Heart right ventricle (tissue), 16 donors: ENCODE measurements at regions of chr10 and their contacts with region 1.

Region 1: DNA sequence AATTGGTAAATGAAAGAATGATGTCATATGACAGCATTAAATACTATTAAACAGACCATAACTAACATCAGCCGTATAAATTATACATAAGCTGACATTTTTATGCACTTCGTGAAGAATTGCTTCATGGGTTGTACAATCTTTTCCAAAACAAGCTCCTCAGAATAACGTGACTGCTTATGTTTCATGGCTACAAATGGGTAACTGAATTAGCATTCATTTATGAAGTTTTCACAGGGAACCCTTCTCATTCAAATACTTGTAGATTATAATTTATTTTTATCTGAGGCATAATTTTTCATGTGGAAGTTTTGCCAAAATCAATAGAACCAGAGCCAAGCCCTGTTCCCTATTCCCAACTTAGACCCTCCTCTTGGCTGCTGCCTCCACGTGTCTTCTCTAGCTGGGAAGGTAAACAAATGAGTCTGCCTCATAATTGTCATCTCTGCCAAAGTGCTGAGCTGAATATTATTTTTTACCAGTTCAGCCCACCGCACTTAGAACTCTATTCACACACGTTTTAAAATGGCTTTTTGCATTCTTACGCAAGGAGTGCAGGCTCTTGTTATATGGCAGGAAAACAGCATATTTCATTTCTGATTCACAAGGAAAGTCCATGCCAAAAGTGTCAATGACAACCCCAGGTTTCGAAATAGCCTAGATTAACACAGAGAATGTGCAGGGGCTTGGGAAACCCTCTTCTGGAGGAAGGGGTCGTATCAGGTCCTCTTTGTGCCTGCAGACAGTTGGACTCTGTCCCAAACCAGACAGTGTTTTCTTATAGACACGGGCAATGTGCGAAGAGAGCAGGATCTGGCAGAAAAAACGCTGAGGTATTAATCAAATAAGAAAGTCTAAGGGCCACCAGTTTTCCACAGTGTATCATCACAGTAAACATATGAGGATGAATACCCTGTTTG is 370.7 kb upstream of the MGMT start:
- DNase-seq: peak in 1 of 2 donors; percentile 21
- ATAC-seq: peak; percentile 63 to 88 (median 76)
- H3K4me3 ChIP-seq: no peak overlapping the region
- H3K27ac ChIP-seq: peak overlapping the region in 3 of 10 donors; percentile 6 to 37 (median 28)
- H3K4me1 ChIP-seq: peaks cover 0 to 17% (median 5%) of the 10 kb centered on the region in 9 donors
- H3K27me3 ChIP-seq: peaks cover 0 to 4% (median 0%) of the 10 kb centered on the region in 7 donors
- CTCF ChIP-seq: no peak

Region 2: GRCh38 chr10:128386816-128387604 is 709.3 kb before region 1 on chr10:
- intact Hi-C with region 1: no loop called
- DNase-seq: no peak
- ATAC-seq: no peak
- H3K4me3 ChIP-seq: no peak overlapping the region
- H3K27ac ChIP-seq: no peak overlapping the region
- H3K4me1 ChIP-seq: no peaks in the 10 kb centered on the region
- H3K27me3 ChIP-seq: peaks cover 0 to 51% (median 26%) of the 10 kb centered on the region in 7 donors
- CTCF ChIP-seq: no peak

Region 3: GRCh38 chr10:129193148-129193547 is 96.8 kb after region 1 on chr10:
- intact Hi-C with region 1: loop called in 1 of 10 experiments (anchors 10 kb)
- DNase-seq: no peak
- ATAC-seq: peak in 2 of 8 donors; percentile 28 to 59
- H3K4me3 ChIP-seq: no peak overlapping the region
- H3K27ac ChIP-seq: no peak overlapping the region
- H3K4me1 ChIP-seq: peaks cover 0 to 19% (median 4%) of the 10 kb centered on the region in 9 donors
- H3K27me3 ChIP-seq: peaks cover 0 to 10% (median 0%) of the 10 kb centered on the region in 7 donors
- CTCF ChIP-seq: no peak